ENCODE measurements at regions of chr1 and their contacts with region 1.

Region 1: DNA sequence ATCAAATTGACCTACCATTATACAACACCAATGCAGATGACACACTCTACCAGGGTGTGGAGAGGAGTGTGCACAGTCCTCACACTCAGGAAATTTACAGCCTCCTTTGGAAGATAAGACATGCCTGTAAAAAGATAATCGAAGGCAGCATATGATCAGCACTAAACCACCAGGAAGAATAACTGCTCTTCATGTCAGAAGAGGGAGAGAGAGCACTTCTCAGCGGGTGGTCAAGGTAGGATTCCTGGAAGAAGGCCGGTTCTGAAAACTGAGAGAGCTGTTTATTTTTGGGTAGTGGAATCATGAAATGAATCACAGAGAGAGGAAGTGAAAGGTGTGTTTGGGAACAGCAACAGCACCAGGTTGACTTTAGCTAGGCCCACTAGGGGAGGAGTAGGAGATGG is 14.0 kb upstream of the ZNF697 start:
- DNase-seq: no peak
- H3K4me3 ChIP-seq: no peak overlapping the region
- H3K27ac ChIP-seq: no peak overlapping the region
- H3K4me1 ChIP-seq: no peaks in the 10 kb centered on the region
- H3K27me3 ChIP-seq: no peaks in the 10 kb centered on the region
- CTCF ChIP-seq: no peak
- EP300 ChIP-seq: no peak
- POLR2A ChIP-seq: no peak

Region 2: DNA sequence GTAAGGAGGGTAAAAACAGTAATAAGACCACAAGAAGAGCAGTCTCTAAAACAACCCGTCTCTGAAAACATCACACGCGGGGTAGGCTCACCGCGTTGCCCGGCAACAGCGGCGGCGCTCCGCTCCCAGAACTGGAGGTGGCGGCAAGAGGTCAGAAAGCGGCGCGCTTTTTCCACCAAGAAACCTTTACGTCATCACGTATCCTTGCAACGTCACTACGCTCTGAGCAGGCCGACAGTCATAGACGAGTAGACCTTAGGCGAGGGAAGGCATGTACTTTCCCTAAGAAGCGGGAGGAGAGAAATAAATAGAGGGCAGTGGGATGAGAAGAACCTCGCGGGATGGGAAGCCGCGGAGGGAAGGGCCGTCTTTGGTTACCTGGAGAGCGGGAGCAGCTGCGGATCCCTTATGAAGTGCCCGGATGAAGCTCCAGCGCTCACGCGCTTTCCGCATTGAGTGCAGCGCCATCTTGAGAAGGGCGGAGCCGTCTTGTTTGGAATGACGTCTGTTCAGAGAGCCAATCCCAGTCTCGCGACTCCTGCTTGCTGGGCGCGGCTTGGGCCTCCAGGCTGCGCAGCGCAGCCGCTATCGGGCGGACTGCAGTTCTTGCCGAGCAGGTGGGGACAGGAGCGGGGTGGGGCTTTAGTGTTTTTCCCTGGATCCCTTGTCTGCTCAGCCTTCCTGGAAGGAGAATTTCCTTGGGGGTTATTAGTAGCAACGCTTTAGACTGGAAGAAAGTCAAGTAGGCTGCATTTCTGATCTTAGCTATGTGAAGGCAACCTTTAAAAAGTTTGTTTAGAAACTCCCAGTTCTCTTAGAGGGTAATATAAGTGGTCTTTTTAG is 521.6 kb before region 1 on chr1 and contains the start of gene WARS2:
- intact Hi-C with region 1: loop called (anchors 10 kb)
- DNase-seq: peak; percentile 98
- H3K4me3 ChIP-seq: peak within 1 kb of the TSS; percentile 54 to 66 (median 62)
- H3K27ac ChIP-seq: peak within 1 kb of the TSS; percentile 92 to 96 (median 94)
- H3K4me1 ChIP-seq: peaks cover 17 to 33% (median 24%) of the 10 kb centered on the region in 4 donors
- H3K27me3 ChIP-seq: no peaks in the 10 kb centered on the region
- CTCF ChIP-seq: no peak
- EP300 ChIP-seq: no peak
- POLR2A ChIP-seq: peak; percentile 40
- total RNA-seq, gene WARS2: 5.8 to 12.6 (median 10.0) TPM

Region 3: GRCh38 chr1:119613769-119614720 is 48.0 kb before region 1 on chr1:
- intact Hi-C with region 1: loop called (anchors 1 kb)
- DNase-seq: peak; percentile 96
- H3K4me3 ChIP-seq: no peak overlapping the region
- H3K27ac ChIP-seq: no peak overlapping the region
- H3K4me1 ChIP-seq: peaks cover 10 to 23% (median 11%) of the 10 kb centered on the region in 4 donors
- H3K27me3 ChIP-seq: no peaks in the 10 kb centered on the region
- CTCF ChIP-seq: peak; percentile 81 to 92 (median 82)
- EP300 ChIP-seq: no peak
- POLR2A ChIP-seq: no peak

Region 4: DNA sequence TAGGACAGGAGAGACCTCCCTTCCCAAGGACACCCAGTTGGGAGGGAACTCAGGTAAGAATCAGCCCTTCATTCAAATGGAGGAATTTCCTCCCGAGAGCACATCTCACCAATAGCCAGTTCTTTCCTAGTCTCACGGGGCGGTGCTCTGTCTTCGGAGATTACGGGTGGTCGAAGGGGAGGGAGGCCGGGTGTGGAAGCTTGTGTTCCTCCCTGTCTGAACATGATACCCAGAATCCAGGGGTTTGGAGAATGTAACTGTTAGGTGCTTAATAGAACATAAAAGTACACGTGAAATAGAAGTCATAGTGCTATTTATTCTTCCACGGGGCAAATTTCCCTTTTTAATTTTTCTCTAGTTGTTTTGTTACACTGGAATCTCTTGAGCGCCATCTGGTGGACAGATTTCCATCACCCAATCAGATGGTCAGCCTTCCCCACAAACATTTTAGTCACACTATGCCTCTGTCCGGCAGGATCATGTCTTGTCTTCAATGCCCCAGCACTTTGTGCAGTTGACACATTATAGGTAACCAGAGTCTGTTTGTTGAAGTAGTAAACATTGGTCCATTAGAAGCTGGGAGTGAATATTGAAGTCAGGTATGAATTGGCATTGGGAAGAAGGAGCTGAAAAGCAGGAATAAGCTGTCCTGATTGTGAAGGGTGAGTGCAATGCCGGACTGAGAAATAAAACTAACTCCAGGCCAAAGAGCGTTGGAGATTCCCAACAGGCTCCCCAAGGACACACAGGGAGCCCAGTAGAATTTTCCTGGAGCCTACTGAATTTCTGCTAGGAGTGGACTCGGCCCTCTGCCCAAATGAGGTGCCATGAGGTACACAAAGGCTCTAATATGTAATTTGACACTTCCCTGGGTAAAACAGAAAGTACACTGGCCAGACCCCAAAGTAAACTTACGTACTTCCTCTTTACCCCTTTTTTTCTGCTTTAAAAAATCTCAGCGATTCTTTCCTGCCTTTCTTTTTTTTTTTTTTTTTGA is 13.6 kb after region 1 on chr1:
- intact Hi-C with region 1: loop called (anchors 1 kb)
- DNase-seq: peak; percentile 97
- H3K4me3 ChIP-seq: peak overlapping the region; percentile 47 to 63 (median 49)
- H3K27ac ChIP-seq: peak overlapping the region in 3 of 4 donors; percentile 58 to 62 (median 59)
- H3K4me1 ChIP-seq: peaks cover 9 to 11% (median 10%) of the 10 kb centered on the region in 4 donors
- H3K27me3 ChIP-seq: no peaks in the 10 kb centered on the region
- CTCF ChIP-seq: peak; percentile 75 to 87 (median 86)
- EP300 ChIP-seq: no peak
- POLR2A ChIP-seq: no peak

Region 5: GRCh38 chr1:119924948-119925898 is 263.2 kb after region 1 on chr1:
- intact Hi-C with region 1: no loop called
- DNase-seq: peak; percentile 45
- H3K4me3 ChIP-seq: no peak overlapping the region
- H3K27ac ChIP-seq: no peak overlapping the region
- H3K4me1 ChIP-seq: no peaks in the 10 kb centered on the region
- H3K27me3 ChIP-seq: no peaks in the 10 kb centered on the region
- CTCF ChIP-seq: no peak
- EP300 ChIP-seq: no peak
- POLR2A ChIP-seq: no peak